Body of pancreas (tissue), 4 donors: ENCODE measurements at regions of chr19 and their contacts with region 1.

Region 1: DNA sequence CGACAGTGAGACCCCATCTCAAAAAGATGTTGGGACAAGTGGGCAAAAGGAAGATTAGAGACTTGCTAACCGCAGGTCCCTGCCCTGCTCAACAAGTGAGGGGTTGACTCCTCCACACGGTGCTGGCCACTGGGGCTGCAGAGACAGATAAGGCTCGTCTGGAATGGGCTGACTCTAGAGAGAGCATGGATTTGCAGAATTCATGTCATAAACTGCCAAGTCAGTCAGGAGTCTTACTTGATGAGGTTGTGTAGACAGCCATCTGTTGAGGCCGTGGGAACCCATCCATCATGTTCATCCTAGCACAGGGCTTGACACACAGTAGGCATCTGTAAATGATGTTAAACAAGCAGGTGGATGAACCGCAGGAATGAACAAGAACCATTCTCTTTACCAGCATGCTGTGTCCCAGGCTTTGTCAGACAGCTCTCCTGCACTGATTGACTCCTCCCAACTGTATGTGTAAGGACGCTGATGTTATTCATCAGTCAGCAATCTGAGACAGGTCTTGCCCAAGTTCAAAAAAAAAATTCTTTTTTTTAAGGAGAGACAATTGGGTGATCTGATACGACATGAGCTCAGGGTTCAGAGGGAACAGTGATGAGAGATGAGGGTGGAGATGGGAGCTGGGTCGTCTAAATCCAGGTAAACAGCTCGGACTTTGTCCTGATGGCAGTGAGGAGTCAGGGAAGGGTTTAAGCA is 8.8 kb downstream of the PAF1 start:
- DNase-seq: no peak
- ATAC-seq: no peak
- H3K4me3 ChIP-seq: no peak overlapping the region
- H3K27ac ChIP-seq: no peak overlapping the region
- H3K4me1 ChIP-seq: no peaks in the 10 kb centered on the region
- H3K27me3 ChIP-seq: no peaks in the 10 kb centered on the region
- CTCF ChIP-seq: no peak
- POLR2A ChIP-seq: no peak

Region 2: DNA sequence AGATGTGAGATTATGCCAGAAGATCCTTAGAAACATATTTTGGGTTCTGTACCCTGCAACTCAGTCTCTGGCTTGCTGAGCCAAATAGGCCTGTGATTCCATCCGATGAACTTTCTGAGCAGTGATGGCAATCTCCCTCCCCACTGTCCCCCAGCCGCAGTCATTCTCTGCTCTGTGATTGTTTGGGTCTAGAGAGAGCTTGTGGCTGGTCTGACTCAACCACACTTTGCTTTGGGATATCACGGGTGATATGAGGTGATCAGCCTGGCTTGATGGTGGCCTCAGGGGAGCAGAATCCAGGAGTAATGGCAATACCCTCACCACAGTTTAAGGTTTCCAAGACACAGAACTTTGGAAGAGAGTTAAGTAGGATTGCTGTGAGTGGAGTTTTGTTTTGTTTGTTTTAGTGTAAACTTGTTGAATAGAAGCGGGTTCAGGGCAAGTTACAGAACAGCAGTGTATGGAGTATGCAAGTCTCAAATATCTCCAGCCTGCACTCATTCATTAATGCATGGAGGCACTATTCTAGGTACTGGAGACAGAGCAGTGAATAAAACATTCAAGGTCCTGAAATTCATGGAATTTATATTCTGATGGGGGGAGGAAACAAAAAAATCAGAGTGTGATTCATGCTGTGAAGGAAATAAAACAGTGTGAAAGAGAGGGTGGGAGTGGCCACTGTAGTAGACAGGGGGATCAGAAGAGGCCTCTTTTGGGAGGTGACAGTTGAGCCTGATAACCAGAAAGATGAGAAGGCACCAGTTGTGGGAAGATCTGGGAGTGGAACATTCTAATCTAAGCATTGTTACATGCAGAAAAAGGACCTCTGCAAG is 34.5 kb before region 1 on chr19:
- intact Hi-C with region 1: loop called (anchors 5 kb)
- DNase-seq: no peak
- ATAC-seq: no peak
- H3K4me3 ChIP-seq: no peak overlapping the region
- H3K27ac ChIP-seq: no peak overlapping the region
- H3K4me1 ChIP-seq: peaks cover 34% of the 10 kb centered on the region
- H3K27me3 ChIP-seq: no peaks in the 10 kb centered on the region
- CTCF ChIP-seq: no peak
- POLR2A ChIP-seq: no peak